Naive thymus-derived CD4-positive, alpha-beta T cell (primary cell): ENCODE measurements at regions of chr7 and their contacts with region 1.

Region 1: GRCh38 chr7:139095194-139095659 is 14.3 kb downstream of the ZC3HAV1 start:
- DNase-seq: peak; percentile 45 to 95 (median 93)
- ATAC-seq: peak; percentile 96
- H3K4me3 ChIP-seq: peak overlapping the region; percentile 84
- H3K4me3 Mint-ChIP-seq: peak overlapping the region; percentile 81 to 98 (median 88)
- H3K27ac ChIP-seq: peak overlapping the region; percentile 75
- H3K27ac Mint-ChIP-seq: peak overlapping the region; percentile 89 to 97 (median 94)
- H3K4me1 ChIP-seq: peaks cover 53 to 75% of the 10 kb centered on the region in 2 donors
- H3K4me1 Mint-ChIP-seq: peaks cover 60 to 100% (median 87%) of the 10 kb centered on the region in 7 donors
- H3K27me3 ChIP-seq: no peaks in the 10 kb centered on the region
- H3K27me3 Mint-ChIP-seq: peaks cover 0 to 3% (median 0%) of the 10 kb centered on the region in 5 donors

Region 2: DNA sequence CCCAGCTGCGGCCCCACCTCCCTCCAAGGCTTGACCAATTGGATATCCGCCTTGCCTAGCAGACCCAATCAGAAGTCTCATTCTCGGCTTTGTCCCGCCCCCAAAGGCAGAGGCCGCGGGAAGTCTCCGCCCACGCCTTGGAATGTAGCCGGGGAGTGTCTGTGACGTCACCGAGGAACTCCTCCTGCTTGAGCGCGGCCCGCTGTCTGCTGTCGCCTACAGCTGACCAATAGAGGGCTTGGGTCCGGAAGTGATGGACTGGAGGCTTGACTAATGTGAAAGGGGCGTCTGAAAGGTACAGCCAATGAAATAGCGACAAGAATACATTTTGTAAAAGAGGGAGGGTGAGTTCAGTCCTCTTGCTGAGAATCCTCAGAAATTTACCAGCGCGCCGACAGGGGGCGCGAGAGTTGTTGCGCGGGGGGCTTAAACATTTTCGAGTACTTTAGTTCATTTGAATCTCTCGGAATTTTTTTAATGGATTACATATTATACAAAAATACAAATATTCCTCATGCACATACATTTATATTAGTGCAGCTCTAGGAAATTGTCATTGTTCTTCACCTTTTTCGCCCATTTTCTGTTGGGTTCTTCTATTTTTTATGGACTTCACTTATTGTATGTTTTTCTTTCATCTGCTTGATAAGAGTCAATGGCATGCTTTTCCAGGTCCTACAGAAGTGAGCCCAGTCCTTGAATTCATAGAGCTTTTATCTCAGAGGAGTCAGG is 1093.0 kb before region 1 on chr7:
- CTCF ChIA-PET with region 1: no interaction called
- POLR2A ChIA-PET with region 1: no interaction called
- intact Hi-C with region 1: loop called in 1 of 2 experiments (anchors 10 kb)
- DNase-seq: peak; percentile 95 to 98 (median 97)
- ATAC-seq: peak; percentile 95
- H3K4me3 ChIP-seq: peak overlapping the region; percentile 99
- H3K4me3 Mint-ChIP-seq: peak overlapping the region; percentile 89 to 96 (median 94)
- H3K27ac ChIP-seq: peak overlapping the region; percentile 79
- H3K27ac Mint-ChIP-seq: peak overlapping the region; percentile 67 to 95 (median 89)
- H3K4me1 ChIP-seq: peaks cover 6 to 14% of the 10 kb centered on the region in 2 donors
- H3K4me1 Mint-ChIP-seq: peaks cover 9 to 54% (median 45%) of the 10 kb centered on the region in 7 donors
- H3K27me3 ChIP-seq: no peaks in the 10 kb centered on the region
- H3K27me3 Mint-ChIP-seq: no peaks in the 10 kb centered on the region

Region 3: GRCh38 chr7:139080905-139081304 is 14.3 kb before region 1 on chr7:
- CTCF ChIA-PET with region 1: interaction called, 21 read pairs
- POLR2A ChIA-PET with region 1: interaction called, 52 read pairs
- intact Hi-C with region 1: loop called (anchors 1 kb)
- DNase-seq: no peak
- ATAC-seq: peak; percentile 17
- H3K4me3 ChIP-seq: no peak overlapping the region
- H3K4me3 Mint-ChIP-seq: peak overlapping the region; percentile 51 to 98 (median 74)
- H3K27ac ChIP-seq: peak overlapping the region; percentile 56
- H3K27ac Mint-ChIP-seq: peak overlapping the region; percentile 60 to 94 (median 87)
- H3K4me1 ChIP-seq: peaks cover 34 to 75% of the 10 kb centered on the region in 2 donors
- H3K4me1 Mint-ChIP-seq: peaks cover 49 to 98% (median 92%) of the 10 kb centered on the region in 7 donors
- H3K27me3 ChIP-seq: no peaks in the 10 kb centered on the region
- H3K27me3 Mint-ChIP-seq: no peaks in the 10 kb centered on the region

Region 4: GRCh38 chr7:139118234-139118804 is 23.1 kb after region 1 on chr7:
- CTCF ChIA-PET with region 1: interaction called, 5 read pairs
- POLR2A ChIA-PET with region 1: interaction called, 42 read pairs
- intact Hi-C with region 1: no loop called
- DNase-seq: no peak
- ATAC-seq: peak; percentile 37
- H3K4me3 ChIP-seq: peak overlapping the region; percentile 39
- H3K4me3 Mint-ChIP-seq: peak overlapping the region in 9 of 10 donors; percentile 22 to 82 (median 72)
- H3K27ac ChIP-seq: peak overlapping the region; percentile 52
- H3K27ac Mint-ChIP-seq: peak overlapping the region in 8 of 9 donors; percentile 34 to 94 (median 88)
- H3K4me1 ChIP-seq: peaks cover 12 to 30% of the 10 kb centered on the region in 2 donors
- H3K4me1 Mint-ChIP-seq: peaks cover 26 to 54% (median 49%) of the 10 kb centered on the region in 7 donors
- H3K27me3 ChIP-seq: no peaks in the 10 kb centered on the region
- H3K27me3 Mint-ChIP-seq: peaks cover 0 to 5% (median 0%) of the 10 kb centered on the region in 5 donors

Region 5: DNA sequence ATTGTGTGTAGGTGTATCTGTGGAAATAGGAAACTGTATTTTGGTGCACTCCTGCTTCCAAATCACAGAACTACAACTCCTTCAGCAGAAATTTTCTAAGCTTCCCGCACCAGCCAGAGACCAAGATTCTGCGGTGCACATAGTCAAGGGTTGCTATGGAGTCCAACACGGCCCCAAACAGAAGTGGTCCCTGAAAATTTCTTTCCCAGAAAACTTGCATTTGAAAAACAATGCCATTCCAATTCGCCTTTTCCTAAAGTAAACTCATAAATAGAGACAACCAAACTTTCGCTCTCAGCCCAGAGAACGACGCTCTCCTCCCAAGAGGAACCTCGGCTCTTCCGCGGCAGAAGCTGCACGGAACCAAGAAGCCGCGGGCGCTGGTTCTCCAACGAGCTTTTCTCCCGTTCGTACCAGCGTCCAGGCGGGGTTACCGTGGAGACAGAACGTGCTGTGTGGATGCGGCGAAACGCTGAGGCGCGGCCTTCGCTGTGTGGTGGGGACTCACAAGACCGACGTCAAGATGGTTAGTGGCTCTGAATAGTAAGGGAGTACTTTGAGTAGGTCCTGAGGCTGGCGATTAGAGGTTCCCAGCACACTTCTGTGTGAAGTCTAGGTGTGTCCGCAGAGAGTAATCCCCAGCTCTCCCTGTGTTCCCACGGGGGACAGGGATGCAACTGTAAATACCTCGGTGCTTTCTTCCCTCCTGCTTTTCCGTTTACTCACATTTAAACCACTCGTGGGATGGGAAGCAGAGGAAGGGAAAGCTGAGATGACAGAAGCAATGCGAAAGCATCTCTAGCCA is 38.3 kb after region 1 on chr7:
- CTCF ChIA-PET with region 1: interaction called, 8 read pairs
- POLR2A ChIA-PET with region 1: interaction called, 8 read pairs
- intact Hi-C with region 1: loop called in 1 of 2 experiments (anchors 1 kb)
- DNase-seq: peak; percentile 68 to 86 (median 83)
- ATAC-seq: peak; percentile 98
- H3K4me3 ChIP-seq: peak overlapping the region; percentile 86
- H3K4me3 Mint-ChIP-seq: peak overlapping the region; percentile 85 to 96 (median 90)
- H3K27ac ChIP-seq: peak overlapping the region; percentile 72
- H3K27ac Mint-ChIP-seq: peak overlapping the region; percentile 76 to 95 (median 85)
- H3K4me1 ChIP-seq: peaks cover 0 to 10% of the 10 kb centered on the region in 2 donors
- H3K4me1 Mint-ChIP-seq: peaks cover 11 to 33% (median 16%) of the 10 kb centered on the region in 7 donors
- H3K27me3 ChIP-seq: no peaks in the 10 kb centered on the region
- H3K27me3 Mint-ChIP-seq: peaks cover 0 to 5% (median 0%) of the 10 kb centered on the region in 5 donors

Region 6: GRCh38 chr7:139203992-139204391 is 108.8 kb after region 1 on chr7:
- CTCF ChIA-PET with region 1: no interaction called
- POLR2A ChIA-PET with region 1: no interaction called
- intact Hi-C with region 1: no loop called
- DNase-seq: no peak
- ATAC-seq: no peak
- H3K4me3 ChIP-seq: no peak overlapping the region
- H3K4me3 Mint-ChIP-seq: no peak overlapping the region
- H3K27ac ChIP-seq: no peak overlapping the region
- H3K27ac Mint-ChIP-seq: no peak overlapping the region
- H3K4me1 ChIP-seq: no peaks in the 10 kb centered on the region
- H3K4me1 Mint-ChIP-seq: no peaks in the 10 kb centered on the region
- H3K27me3 ChIP-seq: no peaks in the 10 kb centered on the region
- H3K27me3 Mint-ChIP-seq: peaks cover 0 to 16% (median 9%) of the 10 kb centered on the region in 5 donors